G401 (cell line): ENCODE measurements at regions of chr12 and their contacts with region 1.

Region 1: DNA sequence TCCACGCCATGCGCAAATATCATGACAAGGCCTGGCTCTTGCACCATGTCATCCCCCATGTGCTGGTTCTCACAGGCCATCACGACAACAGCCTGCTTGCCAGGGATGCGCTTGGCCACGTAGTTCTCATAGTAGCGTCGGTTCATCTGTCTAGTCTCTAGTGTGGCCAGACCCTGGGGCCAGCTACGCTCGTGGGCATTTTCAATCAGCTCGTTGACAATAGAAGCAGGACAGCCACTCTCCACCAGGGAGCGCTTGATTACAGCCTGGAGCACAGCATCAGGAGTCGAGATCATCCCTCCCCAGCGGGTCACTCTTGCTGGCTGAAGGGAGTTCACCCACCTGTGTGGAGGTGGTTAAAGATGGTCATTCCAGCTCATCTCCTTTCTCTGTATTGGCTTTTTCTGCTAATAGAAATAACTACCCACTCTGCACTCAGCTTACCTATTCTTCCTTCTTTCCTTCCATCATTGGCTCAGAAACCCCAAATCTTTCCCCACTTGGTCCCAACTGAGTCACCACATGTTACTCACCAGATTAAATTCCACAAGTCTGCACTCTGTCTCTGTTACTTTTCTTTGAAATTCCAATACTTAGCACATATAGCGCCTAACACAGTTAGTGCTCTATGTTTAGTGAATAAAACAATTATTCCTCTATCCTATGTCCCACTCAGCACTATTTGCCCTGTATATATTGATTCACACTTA is 15.1 kb downstream of the RNF41 start:
- DNase-seq: peak; percentile 63

Region 2: GRCh38 chr12:56178347-56178746 is 28.3 kb before region 1 on chr12:
- in situ Hi-C with region 1: no loop called
- DNase-seq: no peak

Region 3: GRCh38 chr12:56299853-56300643 is 93.4 kb after region 1 on chr12 and contains the start of gene CS:
- in situ Hi-C with region 1: loop called (anchors 10 kb)
- DNase-seq: peak; percentile 99
- total RNA-seq, gene CS: 56.9 and 64.5 TPM in 2 replicates

Region 4: DNA sequence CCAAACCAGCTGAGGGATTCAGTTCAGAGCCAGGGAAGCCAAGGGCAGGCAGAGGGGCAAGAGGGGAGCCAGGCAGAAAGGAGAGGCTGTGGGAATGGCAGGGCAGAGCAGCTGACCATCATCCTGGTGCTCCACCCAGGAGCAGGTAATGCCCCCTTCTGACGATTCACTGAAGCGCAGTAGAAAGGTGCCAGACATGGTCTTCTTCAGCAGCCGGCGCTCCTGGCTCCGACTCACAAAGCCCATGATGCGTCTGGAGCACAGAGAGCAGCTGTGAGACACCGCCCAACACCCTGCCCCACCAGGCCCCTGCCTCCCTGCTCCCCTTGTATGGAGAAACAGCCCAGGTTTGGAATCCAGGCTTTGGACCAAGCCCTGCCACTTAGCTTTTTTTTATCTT is 140.1 kb after region 1 on chr12:
- in situ Hi-C with region 1: no loop called
- DNase-seq: peak; percentile 53

Region 5: DNA sequence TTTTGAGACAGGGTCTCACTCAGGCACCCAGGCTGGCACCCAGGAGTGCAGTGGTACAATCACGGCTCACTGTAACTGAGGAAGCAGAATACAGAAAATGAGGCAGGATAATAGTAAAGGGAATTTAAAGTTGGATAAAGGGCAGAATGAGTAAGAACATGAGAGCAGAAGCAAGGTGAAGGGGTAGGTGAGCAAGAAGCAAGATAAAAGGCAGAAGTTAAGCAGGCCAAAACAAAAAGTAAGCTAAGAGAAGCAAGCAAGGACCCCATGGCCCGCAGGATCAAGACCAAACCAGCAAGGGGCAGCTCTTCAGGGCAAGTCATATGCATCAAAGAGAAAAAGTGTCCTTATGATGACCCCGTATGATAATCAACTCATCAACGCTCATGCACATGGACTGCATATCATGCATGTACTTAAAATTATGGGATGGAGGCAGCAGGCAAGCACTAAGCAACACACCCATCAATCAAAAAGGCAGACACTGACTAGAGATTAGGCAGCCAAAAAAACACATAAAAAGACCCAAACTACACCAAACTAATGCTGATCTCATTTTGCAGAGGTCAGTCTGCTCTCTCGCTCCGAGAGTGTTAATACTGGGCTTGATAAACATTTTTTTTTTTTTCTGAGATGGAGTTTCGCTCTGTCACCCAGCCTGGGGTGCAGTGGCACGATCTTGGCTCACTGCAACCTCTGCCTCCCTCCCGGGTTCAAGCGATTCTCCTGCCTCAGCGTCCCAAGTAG is 231.0 kb after region 1 on chr12:
- in situ Hi-C with region 1: no loop called
- DNase-seq: no peak